ENCODE measurements at regions of chr20 and their contacts with region 1.

Region 1: DNA sequence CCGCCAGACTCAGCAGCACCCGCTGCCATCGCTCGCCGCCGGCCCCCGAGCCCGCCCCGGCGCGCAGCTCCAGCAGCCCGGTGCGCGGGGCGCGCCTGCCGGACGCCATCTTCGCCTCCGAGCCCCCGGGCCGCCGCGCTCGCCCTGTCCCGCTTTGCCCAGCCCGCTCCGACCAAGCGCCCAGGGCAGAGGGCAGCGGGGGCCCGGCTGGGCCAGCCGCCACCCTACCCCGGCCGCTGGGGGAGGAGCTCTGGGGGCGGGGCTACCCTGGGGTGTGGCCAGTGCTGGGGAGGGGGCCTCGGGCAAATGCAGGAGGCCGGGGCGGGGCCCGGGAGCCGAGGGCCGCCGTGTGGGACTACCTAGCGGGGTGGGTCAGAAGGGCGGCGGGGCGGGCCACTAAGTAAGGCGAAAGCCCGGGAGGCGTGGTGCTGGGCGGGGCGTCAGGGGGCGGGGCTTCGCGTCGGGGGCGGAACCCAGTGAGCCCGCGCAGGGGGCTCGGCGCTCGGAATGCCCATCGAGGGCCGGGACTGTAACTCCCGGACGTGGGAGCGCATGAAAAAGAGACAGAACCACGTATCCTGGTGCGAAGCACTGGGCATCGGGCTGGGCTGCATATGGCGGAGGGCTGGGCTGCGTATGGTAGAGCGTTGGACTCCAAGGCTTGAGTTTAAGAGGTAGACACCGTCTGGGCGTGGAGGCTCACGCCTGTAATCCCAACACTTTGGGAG is at the start of gene SNTA1:
- DNase-seq: peak; percentile 49
- ATAC-seq: peak; percentile 92
- H3K4me3 ChIP-seq: peak within 1 kb of the TSS; percentile 93
- H3K27ac ChIP-seq: peak within 1 kb of the TSS; percentile 41
- H3K4me1 ChIP-seq: peaks cover 4% of the 10 kb centered on the region; the same call in 1 of the 2 replicates
- H3K27me3 ChIP-seq: no peaks in the 10 kb centered on the region
- CTCF ChIP-seq: no peak
- POLR2A ChIP-seq: no peak
- RAD21 ChIP-seq: no peak
- total RNA-seq, gene SNTA1: 13.3 and 15.4 TPM in 2 replicates

Region 2: DNA sequence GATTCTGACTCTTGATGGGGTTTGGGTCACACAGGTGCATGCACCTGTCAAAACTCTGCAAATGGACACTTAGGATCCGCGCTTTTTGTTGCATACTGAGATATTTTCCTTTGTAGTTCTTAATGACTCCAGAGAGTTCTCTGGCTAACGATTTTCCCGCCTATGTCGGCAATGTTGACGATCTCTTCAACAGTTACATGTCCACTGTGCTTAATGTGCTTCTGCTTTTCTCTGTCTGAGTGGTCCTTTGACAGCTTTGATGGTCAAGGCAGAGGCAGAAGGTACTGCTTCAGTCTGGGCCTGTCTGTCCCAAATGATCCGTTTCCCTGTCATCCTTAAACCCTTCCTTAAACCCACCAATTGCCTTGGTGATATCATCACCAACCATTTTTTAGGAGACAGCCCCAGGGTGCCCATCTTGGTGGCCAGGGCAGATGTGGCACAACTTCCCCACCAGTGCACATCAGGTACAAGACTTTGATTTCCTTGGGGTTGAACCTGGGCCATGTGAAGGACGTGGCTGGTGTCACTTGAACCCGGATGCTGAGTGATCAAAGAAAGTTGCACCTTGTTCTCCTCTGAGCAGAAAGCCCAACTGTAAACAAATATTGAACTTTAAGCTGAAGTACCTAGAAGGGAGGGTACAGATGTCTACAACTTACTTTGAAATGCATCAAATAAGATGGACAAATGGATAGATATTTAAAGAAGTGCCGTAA is 171.4 kb before region 1 on chr20:
- CTCF ChIA-PET with region 1: no interaction called
- POLR2A ChIA-PET with region 1: interaction called, 14 read pairs
- dilution Hi-C with region 1: no loop called
- in situ Hi-C with region 1: no loop called
- intact Hi-C with region 1: no loop called
- DNase-seq: no peak
- ATAC-seq: no peak
- H3K4me3 ChIP-seq: no peak overlapping the region
- H3K27ac ChIP-seq: no peak overlapping the region
- H3K4me1 ChIP-seq: no peaks in the 10 kb centered on the region
- H3K27me3 ChIP-seq: peaks cover 18% of the 10 kb centered on the region
- CTCF ChIP-seq: no peak
- POLR2A ChIP-seq: no peak
- RAD21 ChIP-seq: no peak

Region 3: DNA sequence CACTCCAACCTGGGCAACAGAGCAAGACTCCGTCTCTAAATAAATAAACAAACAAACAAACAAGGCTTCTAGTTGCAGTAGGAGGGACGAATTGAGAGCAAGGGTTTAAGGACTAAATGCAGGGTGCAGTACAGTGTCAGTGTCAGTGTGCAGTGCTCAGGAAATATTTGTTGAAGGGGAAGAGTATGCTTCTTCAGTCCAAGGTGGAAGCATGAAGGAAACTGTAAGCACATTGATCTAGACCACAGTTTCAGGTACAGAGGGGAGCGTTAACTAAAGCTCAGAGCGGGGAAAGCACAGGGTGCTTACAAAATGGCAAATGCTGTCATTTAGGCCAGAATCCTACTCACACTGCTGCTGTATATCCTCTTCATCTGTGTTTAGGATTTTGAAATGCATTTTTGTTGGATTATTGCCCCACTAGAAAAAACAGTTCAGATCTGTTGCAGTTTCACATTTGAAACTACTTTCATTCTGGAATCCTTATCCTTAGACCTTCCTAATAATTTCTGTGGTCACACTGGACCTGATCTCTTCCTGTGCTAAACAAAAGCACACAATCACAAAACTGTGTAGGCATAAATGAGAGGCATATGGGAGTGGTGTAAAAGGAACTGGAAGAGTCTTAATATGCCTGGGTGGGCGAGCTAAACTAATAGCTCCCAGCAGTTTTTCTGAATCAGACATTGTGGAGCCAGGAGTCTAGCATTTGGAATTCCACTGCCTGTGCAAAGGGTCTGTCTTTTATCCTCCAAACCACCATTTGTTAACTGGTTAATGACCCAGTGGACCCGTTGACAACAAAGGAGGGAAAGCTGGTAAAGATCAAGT is 87.6 kb after region 1 on chr20:
- CTCF ChIA-PET with region 1: no interaction called
- POLR2A ChIA-PET with region 1: no interaction called
- dilution Hi-C with region 1: no loop called
- in situ Hi-C with region 1: no loop called
- intact Hi-C with region 1: no loop called
- DNase-seq: peak; percentile 51
- ATAC-seq: peak; percentile 74
- H3K4me3 ChIP-seq: peak overlapping the region; percentile 26; the same call in 1 of the 2 replicates
- H3K27ac ChIP-seq: peak overlapping the region; percentile 56; the same call in 1 of the 2 replicates
- H3K4me1 ChIP-seq: peaks cover 21% of the 10 kb centered on the region
- H3K27me3 ChIP-seq: no peaks in the 10 kb centered on the region
- CTCF ChIP-seq: no peak
- POLR2A ChIP-seq: no peak
- RAD21 ChIP-seq: no peak

Region 4: DNA sequence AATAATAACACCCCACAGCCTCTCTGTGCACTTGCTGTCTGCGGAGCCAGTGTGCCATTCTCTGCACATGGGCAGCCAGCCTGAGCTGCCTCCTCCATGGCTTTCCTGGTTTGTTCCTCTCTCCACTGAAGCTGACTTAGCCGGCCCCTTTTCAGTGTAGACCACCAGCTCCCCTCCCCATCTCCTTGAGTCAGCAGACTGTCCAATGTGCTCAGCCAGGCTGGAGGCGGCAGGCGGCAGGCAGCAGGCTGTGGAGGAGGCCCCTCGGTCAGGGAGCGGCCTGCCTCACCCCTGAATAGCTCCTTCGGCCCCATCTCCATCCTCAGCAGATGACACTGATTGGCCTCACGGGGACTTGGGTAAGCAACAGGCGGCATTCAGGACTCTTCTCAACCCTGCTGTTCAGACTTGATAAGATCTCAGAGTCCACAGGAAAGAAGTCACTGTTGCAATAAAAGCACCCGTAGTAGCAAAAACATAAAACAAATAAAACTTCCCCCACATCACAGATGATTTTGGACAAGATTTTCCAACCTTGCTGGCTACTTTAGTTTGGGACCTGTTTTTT is 201.2 kb after region 1 on chr20:
- CTCF ChIA-PET with region 1: no interaction called
- POLR2A ChIA-PET with region 1: interaction called, 10 read pairs
- dilution Hi-C with region 1: no loop called
- in situ Hi-C with region 1: no loop called
- intact Hi-C with region 1: no loop called
- DNase-seq: no peak
- ATAC-seq: no peak
- H3K4me3 ChIP-seq: no peak overlapping the region
- H3K27ac ChIP-seq: no peak overlapping the region
- H3K4me1 ChIP-seq: 0 out of 2 replicates have a peak, but pooled peaks cover 3% of the 10 kb centered on the region
- H3K27me3 ChIP-seq: no peaks in the 10 kb centered on the region
- CTCF ChIP-seq: no peak
- POLR2A ChIP-seq: no peak
- RAD21 ChIP-seq: no peak

Measured in IMR-90 (cell line).